ENCODE measurements at regions of chr6 and their contacts with region 1.

Region 1: DNA sequence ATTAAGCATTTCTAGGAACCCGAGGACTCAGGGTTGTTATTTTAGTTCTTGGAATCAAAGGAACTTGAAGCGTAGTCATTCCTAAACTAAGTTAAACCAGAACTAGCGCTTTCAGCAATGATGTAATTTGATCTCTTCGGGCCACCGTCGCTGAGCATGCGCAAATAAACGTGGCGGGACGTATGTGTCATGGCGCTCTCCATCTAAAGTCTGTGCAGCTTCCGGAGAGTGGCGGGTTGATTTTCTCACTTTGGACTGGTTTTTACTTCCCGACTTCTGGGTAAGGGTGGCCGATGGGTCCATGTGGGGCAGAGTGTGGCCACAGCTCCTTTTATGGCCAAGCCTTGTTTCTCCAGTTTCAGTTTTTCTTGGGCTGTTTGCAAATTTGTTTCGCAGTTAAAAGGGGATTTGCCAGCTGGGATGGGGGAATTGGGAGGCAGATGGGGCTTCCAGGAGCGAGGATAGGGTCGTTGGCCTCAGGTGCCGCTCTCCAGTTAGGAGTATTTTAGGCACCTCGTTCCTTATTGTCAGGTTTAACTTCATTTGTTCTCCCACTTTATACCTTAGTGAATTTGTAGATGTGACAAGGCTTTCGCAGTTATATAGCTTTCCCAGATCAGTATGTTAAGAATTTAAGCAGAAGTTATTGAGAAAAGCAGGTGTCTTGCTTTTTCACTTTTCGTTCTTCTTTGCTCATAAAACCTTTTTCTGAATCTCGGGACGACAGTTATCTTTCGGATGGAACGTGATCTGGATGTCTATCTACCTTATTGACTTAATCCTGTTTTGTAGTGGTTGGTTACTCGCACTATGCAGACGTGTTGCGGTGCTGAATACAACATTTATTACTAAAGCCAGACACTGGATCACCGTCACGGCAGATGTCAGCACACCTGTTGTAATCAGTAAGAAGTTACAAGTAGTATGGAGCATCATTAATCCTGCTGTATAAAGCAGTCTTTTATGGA is at the start of gene CDKAL1:
- DNase-seq: peak; percentile 96
- total RNA-seq, gene CDKAL1: 8.4 TPM

Region 2: GRCh38 chr6:20092071-20092566 is 442.5 kb before region 1 on chr6:
- intact Hi-C with region 1: loop called (anchors 5 kb)
- DNase-seq: no peak

Region 3: GRCh38 chr6:20212392-20213217 is 322.0 kb before region 1 on chr6 and contains the start of gene MBOAT1:
- intact Hi-C with region 1: loop called (anchors 5 kb)
- DNase-seq: peak; percentile 95
- total RNA-seq, gene MBOAT1: 2.4 TPM

Region 4: DNA sequence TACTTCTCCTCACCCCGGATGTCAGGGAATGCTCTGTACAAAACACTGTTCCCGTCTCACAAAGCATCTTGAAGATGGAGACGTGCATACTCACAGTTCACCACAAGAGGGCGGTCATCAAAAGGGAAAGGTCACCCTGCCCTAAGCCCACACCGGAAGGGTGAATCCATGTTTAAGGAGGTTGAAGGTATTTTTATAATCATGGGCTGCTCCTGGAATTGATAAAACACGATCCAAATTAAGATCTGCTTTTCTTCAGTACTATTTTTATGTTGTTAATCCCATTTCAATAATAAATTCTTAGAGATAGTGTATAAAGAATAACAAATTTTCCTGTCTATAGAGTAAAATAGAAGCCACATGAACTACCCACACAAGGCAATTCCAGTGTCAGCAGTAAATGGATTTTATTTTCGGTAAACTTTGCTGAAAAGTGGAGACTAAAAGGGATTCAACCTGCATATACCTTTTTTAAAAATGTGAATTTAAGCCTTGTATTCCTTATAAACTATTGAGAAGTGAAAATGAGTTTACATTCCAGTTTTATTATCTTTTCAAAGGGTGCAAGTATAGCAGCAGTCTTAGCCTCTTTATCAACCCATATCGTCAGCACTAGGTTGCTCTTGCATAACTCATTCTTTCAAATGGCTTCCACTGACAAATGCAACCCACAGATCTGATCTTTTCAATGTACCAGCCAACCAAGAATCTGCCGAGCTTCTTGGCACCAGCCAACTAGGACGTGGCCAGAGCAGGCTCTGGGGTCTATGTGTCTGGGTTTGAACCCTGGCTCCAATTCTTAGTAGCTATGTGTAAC is 242.6 kb before region 1 on chr6:
- intact Hi-C with region 1: loop called (anchors 2 kb)
- DNase-seq: peak; percentile 79

Measured in cardiac septum (tissue), 1 donor.